Activated naive CD8-positive, alpha-beta T cell treated with anti-CD3 and anti-CD28 coated beads, Interleukin-2, amount 10 ng/mL, durations not matched to agents 7 days and 5 days (primary cell): ENCODE measurements at regions of chr19 and their contacts with region 1.

Region 1: DNA sequence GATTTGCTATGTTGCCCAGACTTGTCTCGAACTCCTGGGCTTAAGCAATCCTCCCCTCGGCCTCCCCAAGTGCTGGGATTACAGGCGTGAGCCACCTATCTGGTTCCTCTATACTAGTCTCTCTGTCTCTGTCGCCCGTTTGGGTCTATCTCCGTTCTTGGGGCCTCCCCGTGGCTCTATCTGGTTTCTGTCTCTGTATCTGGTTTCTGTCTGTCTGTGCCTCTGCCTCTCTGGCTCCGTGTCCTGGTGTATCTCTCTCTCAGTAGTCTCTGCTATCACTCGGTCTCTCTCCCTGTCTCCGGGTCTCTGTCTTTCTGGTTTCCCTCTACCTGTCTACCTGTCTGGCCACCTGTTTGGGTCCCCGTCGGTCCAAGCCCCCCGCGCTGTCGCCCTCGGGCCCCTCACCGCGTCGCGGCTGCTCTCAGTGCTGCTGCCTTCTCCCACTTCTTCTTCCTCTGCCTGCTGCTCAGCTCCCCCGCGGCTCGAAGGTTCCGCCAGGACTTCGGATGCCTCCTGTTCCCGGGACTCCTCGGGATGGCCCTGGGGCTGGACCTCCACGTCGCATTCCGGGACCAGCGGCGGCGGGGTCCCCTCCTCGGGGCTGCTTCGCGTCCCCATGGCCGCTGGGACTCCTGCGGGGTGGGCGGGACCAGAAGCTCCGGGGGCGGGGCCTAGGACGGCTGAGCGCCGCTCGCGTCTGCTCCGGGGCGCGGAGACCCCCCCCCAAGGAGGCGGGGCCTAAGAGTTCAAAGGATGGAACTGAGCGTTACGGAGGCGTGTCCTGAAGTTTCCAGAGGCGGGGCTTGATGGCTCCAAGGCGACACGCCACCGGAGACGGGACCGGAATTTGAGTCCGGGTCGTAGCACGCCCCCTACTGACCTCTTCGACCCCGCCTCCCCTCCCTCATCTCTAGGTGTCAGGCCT is 783 bp downstream of the PHLDB3 start:
- DNase-seq: peak; percentile 97
- ATAC-seq: peak; percentile 88
- H3K4me3 Mint-ChIP-seq: peak overlapping the region; percentile 86
- H3K27ac Mint-ChIP-seq: peak overlapping the region; percentile 91
- H3K4me1 Mint-ChIP-seq: peaks cover 15% of the 10 kb centered on the region
- H3K27me3 Mint-ChIP-seq: no peaks in the 10 kb centered on the region

Region 2: DNA sequence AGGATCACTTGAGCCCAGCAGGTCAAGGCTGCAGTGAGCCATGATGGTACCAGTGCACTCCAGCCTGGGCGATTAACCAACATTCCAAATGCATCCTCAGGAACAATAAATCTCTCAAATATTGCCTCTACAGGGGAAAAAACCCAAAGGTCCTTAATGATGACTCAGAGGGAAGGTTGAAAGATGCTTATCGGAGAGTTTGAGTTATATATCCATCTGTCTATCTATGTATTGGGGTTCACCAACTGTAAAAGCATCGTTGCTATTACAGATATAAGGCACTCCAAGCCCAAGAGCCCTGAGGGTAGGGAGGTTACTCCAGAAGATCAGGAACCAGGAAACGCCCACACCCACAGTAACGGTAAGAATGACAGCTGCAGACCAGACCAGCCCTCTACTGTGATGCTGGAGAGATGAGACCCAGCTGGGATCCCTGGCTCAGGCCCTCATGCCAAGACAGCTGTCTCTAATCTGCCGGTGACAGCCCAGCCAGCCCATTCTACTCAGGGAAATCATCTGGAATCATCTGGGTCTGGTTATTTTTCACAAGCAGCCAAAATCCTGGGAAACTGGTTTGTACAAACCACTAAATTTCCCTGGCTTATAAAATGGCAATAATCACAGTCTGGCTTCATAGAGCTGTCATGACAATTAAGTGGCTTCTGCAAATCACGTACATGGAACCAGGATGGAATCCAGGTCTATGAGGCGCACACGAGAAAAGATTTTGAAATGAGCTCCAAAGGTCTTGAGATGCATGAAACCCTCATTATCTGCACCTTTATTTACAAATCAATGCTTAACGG is 65.3 kb before region 1 on chr19:
- POLR2A ChIA-PET with region 1: interaction called, 19 read pairs
- DNase-seq: no peak
- ATAC-seq: no peak
- H3K4me3 Mint-ChIP-seq: peak overlapping the region; percentile 48
- H3K27ac Mint-ChIP-seq: peak overlapping the region; percentile 77
- H3K4me1 Mint-ChIP-seq: peaks cover 17% of the 10 kb centered on the region
- H3K27me3 Mint-ChIP-seq: no peaks in the 10 kb centered on the region

Region 3: DNA sequence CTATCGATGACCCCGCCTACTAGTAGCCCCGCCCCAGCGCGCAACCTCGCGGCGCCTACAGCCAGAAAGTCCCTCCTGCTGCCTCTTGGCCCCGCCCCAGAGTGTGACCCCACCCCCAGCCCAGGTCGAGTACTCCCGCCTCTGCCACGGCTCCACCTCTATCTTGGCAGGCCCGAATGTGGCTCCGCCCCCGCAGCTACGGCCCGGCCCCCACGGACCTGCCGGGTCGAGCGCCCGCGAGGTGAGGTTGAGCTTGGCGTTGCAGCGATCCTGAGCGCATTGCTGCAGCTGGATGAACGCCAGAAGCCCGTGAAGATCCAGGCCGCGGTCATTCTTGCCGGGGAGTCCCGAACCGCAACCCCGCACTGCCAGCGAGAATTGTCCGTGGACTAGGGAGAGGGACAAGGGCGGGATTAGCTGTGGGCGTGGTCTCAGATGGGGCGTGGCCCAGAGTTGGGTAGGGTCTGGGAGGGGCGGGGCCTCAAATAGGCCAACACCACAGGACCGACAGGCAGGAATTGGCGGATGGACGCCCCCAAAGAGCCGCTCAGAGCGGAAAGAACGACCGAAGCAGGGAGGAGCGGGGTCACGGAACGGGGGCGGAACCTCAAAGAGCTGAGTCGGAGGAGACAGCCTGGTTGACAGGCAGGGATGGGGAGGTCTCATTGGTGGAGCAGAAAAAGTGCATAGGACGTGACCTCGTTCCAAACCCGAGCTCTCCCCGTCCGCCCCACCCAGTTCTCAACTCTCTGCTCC is 40.2 kb before region 1 on chr19:
- POLR2A ChIA-PET with region 1: interaction called, 26 read pairs
- DNase-seq: peak; percentile 98
- ATAC-seq: peak; percentile 81
- H3K4me3 Mint-ChIP-seq: peak overlapping the region; percentile 82
- H3K27ac Mint-ChIP-seq: peak overlapping the region; percentile 91
- H3K4me1 Mint-ChIP-seq: peaks cover 14% of the 10 kb centered on the region
- H3K27me3 Mint-ChIP-seq: no peaks in the 10 kb centered on the region